GM10248 (cell line): ENCODE measurements at regions of chr1 and their contacts with region 1.

Region 1: DNA sequence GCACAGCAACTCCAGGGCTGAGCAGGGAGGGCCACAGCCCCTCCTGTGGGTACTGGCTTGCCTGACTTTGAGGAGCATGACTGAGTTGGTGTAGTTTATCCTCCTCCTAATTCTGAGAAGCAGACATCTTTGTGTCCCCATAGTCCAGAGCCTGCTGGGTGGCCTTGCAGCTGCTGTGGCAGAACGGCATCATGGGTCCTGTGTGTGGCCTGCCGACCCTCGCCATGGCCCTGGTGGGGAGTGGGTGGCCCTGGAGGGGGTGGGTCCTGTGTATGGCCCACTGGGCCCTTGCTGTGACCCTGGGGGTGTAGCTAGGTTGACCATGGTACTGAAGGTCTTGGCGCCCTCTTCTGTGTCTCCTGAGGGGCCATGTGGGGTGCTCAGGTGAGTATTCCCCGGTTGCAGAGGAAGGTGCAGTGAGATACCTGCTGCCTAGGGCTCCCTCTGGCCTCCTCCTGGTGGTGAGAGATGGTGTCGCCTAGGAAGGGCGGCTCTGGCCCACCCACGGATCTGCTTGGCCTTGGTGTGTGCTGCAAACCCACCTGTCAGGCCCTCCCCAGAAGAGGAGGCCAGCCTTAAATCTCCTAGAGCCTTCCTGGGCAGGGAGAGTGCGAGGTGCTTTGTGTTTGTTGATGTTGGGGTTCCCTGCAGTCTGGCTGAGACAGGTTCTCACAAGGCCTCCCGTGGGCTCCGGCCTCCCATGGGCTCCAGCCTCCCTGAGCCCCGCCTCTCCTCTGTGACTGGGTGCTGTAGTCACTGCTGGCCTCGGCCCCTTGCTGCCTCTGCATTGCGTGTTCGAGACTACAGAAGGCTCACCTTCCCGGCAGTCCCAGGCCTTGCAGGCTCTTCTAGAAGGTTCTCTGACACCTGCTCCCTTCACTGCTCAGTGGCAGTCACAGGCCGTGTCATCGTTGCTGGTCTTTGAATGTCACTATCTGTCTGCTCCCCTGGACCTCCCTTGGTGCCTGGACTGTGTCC is 7.8 kb downstream of the SNAP47 start:
- DNase-seq: no peak
- CTCF ChIP-seq: no peak

Region 2: DNA sequence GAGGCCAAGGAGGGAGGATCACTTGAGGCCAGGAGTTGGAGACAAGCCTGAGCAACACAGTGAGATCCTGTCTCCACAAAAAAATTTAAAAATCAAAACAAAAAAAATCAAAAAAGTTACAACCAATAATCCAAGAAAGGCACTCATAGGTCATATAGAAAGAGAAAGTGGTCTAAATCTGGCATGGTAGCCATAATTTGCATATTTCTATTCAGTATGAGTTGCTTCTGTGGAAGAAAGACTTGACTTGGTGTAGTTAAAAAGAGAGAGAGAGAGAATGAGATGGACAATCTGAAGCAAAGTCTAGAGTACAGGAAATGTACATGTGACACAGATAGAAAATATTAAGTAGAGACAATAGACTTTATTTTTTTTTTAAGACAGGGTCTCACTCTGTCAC is 30.4 kb before region 1 on chr1:
- CTCF ChIA-PET with region 1: no interaction called
- POLR2A ChIA-PET with region 1: no interaction called
- DNase-seq: peak; percentile 59
- CTCF ChIP-seq: no peak

Region 3: DNA sequence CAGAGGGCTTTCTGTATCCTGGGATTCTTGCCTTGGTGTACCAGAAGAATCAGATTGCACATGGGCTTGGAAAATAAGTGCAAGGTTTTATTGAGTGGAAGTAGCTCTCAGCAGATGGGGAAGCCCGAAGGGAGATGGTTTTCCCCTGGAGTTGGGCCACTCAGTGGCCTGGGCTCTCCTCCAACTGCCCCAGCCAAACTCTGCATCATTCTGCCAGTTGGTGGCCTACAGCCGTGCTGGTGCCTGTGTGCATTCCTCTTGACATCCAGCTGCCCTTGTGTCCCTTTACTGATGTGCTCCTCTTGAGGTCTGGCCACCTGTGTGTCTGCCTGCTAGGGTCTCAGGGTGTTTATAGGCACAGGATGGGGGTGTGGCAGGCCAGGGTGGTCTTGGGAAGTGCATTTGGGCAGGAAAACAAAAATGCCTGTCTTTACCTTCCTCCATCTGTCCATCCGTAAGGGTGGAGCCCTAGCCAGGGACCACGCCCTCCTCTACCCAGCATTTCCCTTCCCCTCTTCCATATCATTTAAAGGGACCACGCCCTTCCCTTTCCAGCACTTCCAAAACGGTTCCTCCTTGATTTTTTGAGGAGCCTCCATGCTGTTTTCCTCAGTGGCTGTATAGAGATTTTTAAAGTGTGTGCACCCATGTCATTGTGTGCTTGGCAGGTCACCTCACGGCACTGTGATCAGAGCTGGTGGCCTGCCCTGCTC is 11.1 kb after region 1 on chr1:
- CTCF ChIA-PET with region 1: interaction called, 10 read pairs
- POLR2A ChIA-PET with region 1: interaction called, 10 read pairs
- DNase-seq: no peak
- CTCF ChIP-seq: no peak

Region 4: GRCh38 chr1:227762233-227762911 is 19.3 kb after region 1 on chr1:
- CTCF ChIA-PET with region 1: interaction called, 10 read pairs
- POLR2A ChIA-PET with region 1: interaction called, 10 read pairs
- DNase-seq: peak; percentile 91
- CTCF ChIP-seq: peak; percentile 95